PC-3 (cell line): ENCODE measurements at regions of chr12 and their contacts with region 1.

Region 1: DNA sequence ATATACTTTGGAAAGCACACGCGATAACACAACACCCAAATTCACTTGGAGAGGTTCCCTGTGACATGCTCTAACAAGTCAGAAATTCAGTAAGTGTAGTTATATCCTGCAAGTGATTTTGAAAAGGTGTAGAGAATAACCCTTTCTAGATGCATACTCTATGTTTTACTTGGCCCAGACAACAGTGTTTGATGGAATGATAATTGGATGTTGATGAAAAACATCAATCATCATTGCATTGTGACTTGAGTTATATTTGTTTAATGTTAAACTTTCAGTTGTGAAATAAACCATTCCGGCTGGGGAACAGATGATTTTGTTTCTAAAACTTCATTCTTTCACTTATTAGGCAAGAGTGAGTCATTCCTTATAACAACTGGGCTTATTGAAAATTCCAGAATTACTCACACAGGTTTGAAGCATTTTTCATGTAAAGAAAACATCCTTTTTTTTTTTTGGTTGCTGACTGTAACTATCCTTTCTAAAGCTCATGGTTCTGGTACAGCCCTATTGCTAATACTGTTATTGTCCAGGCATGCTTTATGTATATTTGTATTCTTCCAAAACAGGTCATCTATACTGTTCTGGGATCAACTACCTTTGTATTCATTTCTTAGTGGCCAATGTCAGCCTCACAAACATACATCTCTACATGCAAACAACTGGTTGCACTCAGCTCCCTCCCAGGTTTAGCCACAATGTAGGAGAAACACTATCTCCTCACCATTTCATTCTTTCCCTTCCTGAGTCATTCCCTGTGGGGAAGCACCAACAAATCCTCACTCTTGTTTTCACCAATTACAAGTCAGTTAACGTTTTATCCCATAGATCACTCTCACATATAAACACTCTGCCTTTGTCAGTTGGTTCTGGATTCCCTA is 121.2 kb upstream of the LRIG3 start:
- DNase-seq: peak; percentile 94
- ATAC-seq: peak; percentile 91
- H3K4me3 ChIP-seq: peak overlapping the region; percentile 25; the same call in 1 of the 2 replicates
- H3K27ac ChIP-seq: peak overlapping the region; percentile 76
- H3K4me1 ChIP-seq: peaks cover 34% of the 10 kb centered on the region
- H3K27me3 ChIP-seq: no peaks in the 10 kb centered on the region
- CTCF ChIP-seq: no peak

Region 2: DNA sequence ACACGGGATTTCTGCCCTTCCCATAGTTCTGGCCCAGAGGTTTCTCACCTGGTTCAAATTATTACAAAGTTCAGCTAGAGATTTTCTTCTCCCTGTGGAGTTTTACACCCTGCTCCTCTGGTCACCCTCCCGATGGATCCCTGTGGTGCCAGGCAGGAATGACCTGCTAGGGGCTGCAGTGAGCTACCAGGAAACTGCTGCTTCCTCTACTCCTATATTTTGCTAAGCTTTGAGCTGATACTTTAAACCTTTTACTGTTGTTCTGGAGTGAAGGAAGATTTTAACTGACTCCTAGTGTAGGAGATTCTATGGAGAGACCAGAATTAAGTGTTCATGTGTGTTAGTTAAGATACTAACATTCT is 90.8 kb before region 1 on chr12:
- CTCF ChIA-PET with region 1: no interaction called
- POLR2A ChIA-PET with region 1: interaction called, 10 read pairs
- intact Hi-C with region 1: no loop called
- DNase-seq: no peak
- ATAC-seq: no peak
- H3K4me3 ChIP-seq: no peak overlapping the region
- H3K27ac ChIP-seq: no peak overlapping the region
- H3K4me1 ChIP-seq: no peaks in the 10 kb centered on the region
- H3K27me3 ChIP-seq: no peaks in the 10 kb centered on the region
- CTCF ChIP-seq: no peak

Region 3: GRCh38 chr12:58988643-58989344 is 52.7 kb before region 1 on chr12:
- CTCF ChIA-PET with region 1: no interaction called
- POLR2A ChIA-PET with region 1: no interaction called
- intact Hi-C with region 1: no loop called
- DNase-seq: no peak
- ATAC-seq: no peak
- H3K4me3 ChIP-seq: no peak overlapping the region
- H3K27ac ChIP-seq: no peak overlapping the region
- H3K4me1 ChIP-seq: no peaks in the 10 kb centered on the region
- H3K27me3 ChIP-seq: no peaks in the 10 kb centered on the region
- CTCF ChIP-seq: no peak

Region 4: GRCh38 chr12:59055204-59055839 is 13.8 kb after region 1 on chr12:
- CTCF ChIA-PET with region 1: no interaction called
- POLR2A ChIA-PET with region 1: no interaction called
- intact Hi-C with region 1: loop called (anchors 1 kb)
- DNase-seq: peak; percentile 94
- ATAC-seq: peak; percentile 99
- H3K4me3 ChIP-seq: no peak overlapping the region
- H3K27ac ChIP-seq: peak overlapping the region; percentile 69
- H3K4me1 ChIP-seq: peaks cover 15% of the 10 kb centered on the region
- H3K27me3 ChIP-seq: no peaks in the 10 kb centered on the region
- CTCF ChIP-seq: no peak